ENCODE measurements at regions of chr10 and their contacts with region 1.

Region 1: DNA sequence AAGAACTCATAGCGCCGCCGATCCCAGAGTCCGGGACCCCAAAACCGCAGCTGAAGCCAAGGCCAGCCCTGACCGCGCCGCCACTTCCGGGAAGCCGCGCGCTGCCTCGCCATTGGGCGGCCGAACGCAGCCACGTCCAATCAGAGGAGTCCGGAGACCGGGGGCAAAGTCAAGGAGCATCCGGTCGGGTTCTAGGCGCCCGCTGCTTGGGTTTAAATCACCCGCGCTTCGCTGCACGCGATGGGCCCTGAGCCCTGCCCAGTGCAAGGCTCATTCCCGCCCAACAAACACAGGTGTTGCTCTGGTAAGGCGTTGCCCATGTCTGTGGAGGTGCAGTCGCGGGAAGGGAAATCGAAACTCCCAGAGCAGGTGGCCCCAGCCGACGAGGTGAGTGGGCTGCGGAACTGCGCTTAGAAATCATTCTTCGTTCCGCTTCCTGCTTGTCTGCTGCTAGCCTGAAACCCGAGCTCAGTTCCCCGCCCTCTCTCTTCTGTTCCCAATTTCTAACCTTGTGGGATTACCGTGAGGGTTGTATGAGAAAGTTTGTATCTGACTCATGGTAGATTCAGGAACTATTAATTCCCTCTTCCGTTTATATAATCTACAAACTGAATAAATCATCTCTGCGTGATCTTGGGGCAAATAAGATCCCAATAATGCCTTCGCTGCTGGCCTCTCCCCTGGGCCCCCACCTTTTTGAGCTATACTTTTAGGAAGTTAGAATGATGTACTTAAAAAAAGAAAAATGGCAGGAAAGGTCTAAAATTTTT is at the start of gene DCLRE1C:
- DNase-seq: peak; percentile 82 to 92 (median 89)
- H3K4me3 ChIP-seq: peak within 1 kb of the TSS; percentile 51 to 82 (median 80)
- H3K4me3 Mint-ChIP-seq: peak within 1 kb of the TSS; percentile 86 to 93
- H3K27ac ChIP-seq: peak within 1 kb of the TSS; percentile 93 to 95
- H3K27ac Mint-ChIP-seq: peak within 1 kb of the TSS; percentile 91 to 97 (median 96)
- H3K4me1 ChIP-seq: peaks cover 47 to 61% of the 10 kb centered on the region in 2 donors
- H3K4me1 Mint-ChIP-seq: peaks cover 44% of the 10 kb centered on the region
- H3K27me3 ChIP-seq: no peaks in the 10 kb centered on the region
- H3K27me3 Mint-ChIP-seq: no peaks in the 10 kb centered on the region
- CTCF ChIP-seq: no peak
- polyA plus RNA-seq, gene DCLRE1C: 8.9 to 17.6 (median 10.9) TPM

Region 2: DNA sequence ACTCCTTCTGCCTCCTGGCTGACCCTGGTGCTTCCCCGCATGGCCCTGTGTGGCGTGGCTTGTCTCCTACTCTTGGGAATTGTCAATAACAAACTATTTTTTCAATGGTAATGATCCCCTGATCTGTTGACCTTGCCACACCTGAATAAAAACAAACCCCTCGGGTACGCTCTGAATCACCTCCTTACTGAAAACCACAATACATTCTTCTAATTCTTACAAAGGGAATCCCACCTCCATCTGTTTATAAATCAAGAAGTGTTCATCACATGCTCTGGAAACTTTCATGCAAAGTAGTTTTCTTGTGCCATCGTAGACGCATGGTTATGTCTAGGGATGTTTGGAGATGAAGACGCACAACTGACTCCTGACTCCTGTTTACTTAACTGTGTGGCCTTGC is 869.3 kb before region 1 on chr10:
- intact Hi-C with region 1: no loop called
- DNase-seq: no peak
- H3K4me3 ChIP-seq: no peak overlapping the region
- H3K4me3 Mint-ChIP-seq: no peak overlapping the region
- H3K27ac ChIP-seq: no peak overlapping the region
- H3K27ac Mint-ChIP-seq: no peak overlapping the region
- H3K4me1 ChIP-seq: no peaks in the 10 kb centered on the region
- H3K4me1 Mint-ChIP-seq: no peaks in the 10 kb centered on the region
- H3K27me3 ChIP-seq: peaks cover 0 to 4% of the 10 kb centered on the region in 2 donors
- H3K27me3 Mint-ChIP-seq: no peaks in the 10 kb centered on the region
- CTCF ChIP-seq: no peak

Region 3: GRCh38 chr10:14878266-14879054 is 75.7 kb before region 1 on chr10 and contains the start of gene SUV39H2:
- intact Hi-C with region 1: loop called in 1 of 2 experiments (anchors 5 kb)
- DNase-seq: peak; percentile 90 to 94 (median 91)
- H3K4me3 ChIP-seq: peak within 1 kb of the TSS; percentile 84 to 97 (median 91)
- H3K4me3 Mint-ChIP-seq: peak within 1 kb of the TSS; percentile 95
- H3K27ac ChIP-seq: peak within 1 kb of the TSS; percentile 84 to 93
- H3K27ac Mint-ChIP-seq: peak within 1 kb of the TSS; percentile 85 to 95 (median 92)
- H3K4me1 ChIP-seq: peaks cover 20 to 44% of the 10 kb centered on the region in 2 donors
- H3K4me1 Mint-ChIP-seq: peaks cover 46% of the 10 kb centered on the region
- H3K27me3 ChIP-seq: no peaks in the 10 kb centered on the region
- H3K27me3 Mint-ChIP-seq: peaks cover 0 to 2% (median 0%) of the 10 kb centered on the region in 3 donors
- CTCF ChIP-seq: no peak
- polyA plus RNA-seq, gene SUV39H2: 0.85 to 1.2 (median 0.86) TPM

Region 4: DNA sequence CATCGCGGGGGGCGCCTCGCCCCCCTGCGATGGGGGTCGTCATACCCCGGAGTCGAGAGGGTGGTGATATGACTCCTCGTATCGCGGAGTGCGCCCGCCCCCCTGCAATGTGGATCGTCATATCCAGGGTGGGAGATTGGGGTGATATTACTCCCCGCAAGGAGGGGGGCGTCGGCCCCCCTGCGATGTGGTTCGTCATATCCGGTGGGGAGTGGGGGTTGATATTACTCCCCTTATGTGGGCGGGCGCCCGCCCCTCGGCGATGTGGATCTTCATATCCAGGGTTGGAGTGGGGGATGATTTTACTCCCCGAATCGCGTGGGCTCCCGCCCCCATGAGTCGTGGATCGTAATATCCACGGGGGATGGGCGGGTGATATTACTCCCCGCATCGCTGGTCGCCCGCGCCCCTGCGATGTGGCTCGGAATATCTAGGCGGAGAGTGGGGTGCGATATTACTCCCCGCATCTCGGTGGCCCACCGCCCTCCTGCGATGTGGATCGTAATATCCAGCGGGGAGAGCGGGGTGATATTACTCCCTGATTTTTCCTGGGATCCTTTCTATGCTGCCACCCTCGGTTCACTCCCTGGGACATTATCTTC is 41.9 kb after region 1 on chr10:
- intact Hi-C with region 1: no loop called
- DNase-seq: no peak
- H3K4me3 ChIP-seq: no peak overlapping the region
- H3K4me3 Mint-ChIP-seq: no peak overlapping the region
- H3K27ac ChIP-seq: no peak overlapping the region
- H3K27ac Mint-ChIP-seq: no peak overlapping the region
- H3K4me1 ChIP-seq: no peaks in the 10 kb centered on the region
- H3K4me1 Mint-ChIP-seq: no peaks in the 10 kb centered on the region
- H3K27me3 ChIP-seq: no peaks in the 10 kb centered on the region
- H3K27me3 Mint-ChIP-seq: peaks cover 0 to 7% (median 4%) of the 10 kb centered on the region in 3 donors
- CTCF ChIP-seq: no peak

Region 5: DNA sequence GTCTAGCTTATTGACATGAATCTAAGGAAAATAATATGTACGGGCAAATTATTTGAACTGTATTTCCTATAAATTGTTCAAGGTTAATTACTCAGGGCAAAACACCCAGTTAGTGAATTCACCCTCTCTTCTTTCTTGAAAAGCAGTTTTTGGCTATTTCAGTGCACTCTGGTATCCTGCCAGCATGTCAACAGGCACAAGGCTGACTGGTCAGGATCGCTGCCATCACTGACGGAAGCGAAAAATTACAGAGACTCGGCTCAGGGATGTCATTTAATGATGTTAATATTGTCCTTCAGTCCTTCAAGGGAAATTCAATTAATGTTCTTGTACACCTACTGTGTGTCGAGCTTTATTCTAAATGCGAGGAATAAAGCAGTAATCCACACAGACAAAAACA is 61.3 kb after region 1 on chr10:
- intact Hi-C with region 1: no loop called
- DNase-seq: no peak
- H3K4me3 ChIP-seq: no peak overlapping the region
- H3K4me3 Mint-ChIP-seq: no peak overlapping the region
- H3K27ac ChIP-seq: no peak overlapping the region
- H3K27ac Mint-ChIP-seq: no peak overlapping the region
- H3K4me1 ChIP-seq: no peaks in the 10 kb centered on the region
- H3K4me1 Mint-ChIP-seq: no peaks in the 10 kb centered on the region
- H3K27me3 ChIP-seq: no peaks in the 10 kb centered on the region
- H3K27me3 Mint-ChIP-seq: peaks cover 2 to 3% (median 2%) of the 10 kb centered on the region in 3 donors
- CTCF ChIP-seq: no peak

Region 6: DNA sequence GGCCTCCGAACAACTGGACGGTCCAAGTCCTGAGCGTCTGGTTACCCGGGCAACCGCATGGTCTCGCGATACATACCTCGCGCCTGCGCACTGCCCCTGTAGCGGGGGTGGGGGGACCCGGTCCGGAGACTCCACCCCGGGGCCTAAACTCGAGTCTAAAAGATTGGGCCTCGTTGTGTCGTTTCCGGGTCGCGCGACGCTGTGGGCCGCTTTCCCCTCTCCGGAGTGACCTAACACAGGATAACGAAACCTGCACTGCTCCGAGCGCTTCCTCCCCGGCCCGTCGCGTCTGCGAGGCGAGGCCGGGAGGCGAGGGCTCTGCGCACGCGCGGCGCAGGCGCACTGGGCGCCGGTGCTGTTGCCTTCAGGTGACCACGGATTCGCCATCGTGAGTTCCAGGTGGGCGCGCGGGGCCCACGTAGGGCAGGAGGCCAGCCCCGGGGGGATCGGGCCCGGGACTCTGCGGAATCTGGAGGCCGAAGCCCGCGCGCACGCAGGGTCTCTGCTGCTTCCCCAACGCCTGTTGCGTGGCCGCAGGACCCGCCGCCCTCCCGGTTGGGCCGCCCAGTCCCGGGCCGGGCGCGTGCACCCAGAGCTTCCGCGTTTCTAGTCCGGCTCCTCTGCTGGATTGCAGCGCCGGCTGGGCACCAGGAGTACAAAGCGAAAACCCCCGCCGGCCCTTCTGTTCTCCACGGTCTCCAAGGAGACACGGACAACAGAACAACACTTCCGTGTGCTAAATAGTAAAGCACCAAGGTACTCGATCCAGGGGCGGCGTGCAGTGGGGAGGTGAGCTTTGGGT is 143.0 kb after region 1 on chr10 and contains the start of gene RPP38:
- intact Hi-C with region 1: loop called (anchors 5 kb)
- DNase-seq: peak; percentile 92 to 94 (median 94)
- H3K4me3 ChIP-seq: peak within 1 kb of the TSS; percentile 67 to 81 (median 81)
- H3K4me3 Mint-ChIP-seq: peak within 1 kb of the TSS; percentile 98 to 99
- H3K27ac ChIP-seq: peak within 1 kb of the TSS; percentile 95 to 96
- H3K27ac Mint-ChIP-seq: peak within 1 kb of the TSS; percentile 97 to 99 (median 98)
- H3K4me1 ChIP-seq: peaks cover 19 to 21% of the 10 kb centered on the region in 2 donors
- H3K4me1 Mint-ChIP-seq: peaks cover 23% of the 10 kb centered on the region
- H3K27me3 ChIP-seq: no peaks in the 10 kb centered on the region
- H3K27me3 Mint-ChIP-seq: peaks cover 0 to 8% (median 2%) of the 10 kb centered on the region in 3 donors
- CTCF ChIP-seq: no peak
- polyA plus RNA-seq, gene RPP38: 8.1 to 13.8 (median 13.3) TPM

Region 7: GRCh38 chr10:15168781-15169554 is 214.8 kb after region 1 on chr10:
- intact Hi-C with region 1: loop called in 1 of 2 experiments (anchors 5 kb)
- DNase-seq: peak; percentile 88 to 95 (median 91)
- H3K4me3 ChIP-seq: peak overlapping the region in 1 of 3 experiments; percentile 45
- H3K4me3 Mint-ChIP-seq: peak overlapping the region; percentile 49 to 62
- H3K27ac ChIP-seq: no peak overlapping the region
- H3K27ac Mint-ChIP-seq: peak overlapping the region in 2 of 7 donors; percentile 50 to 57
- H3K4me1 ChIP-seq: peaks cover 16 to 22% of the 10 kb centered on the region in 2 donors
- H3K4me1 Mint-ChIP-seq: peaks cover 19% of the 10 kb centered on the region
- H3K27me3 ChIP-seq: peaks cover 30 to 32% of the 10 kb centered on the region in 2 donors
- H3K27me3 Mint-ChIP-seq: peaks cover 38 to 48% (median 46%) of the 10 kb centered on the region in 3 donors
- CTCF ChIP-seq: no peak

Measured in CD14-positive monocyte (primary cell).